ENCODE measurements at regions of chr15 and their contacts with region 1.

Region 1: DNA sequence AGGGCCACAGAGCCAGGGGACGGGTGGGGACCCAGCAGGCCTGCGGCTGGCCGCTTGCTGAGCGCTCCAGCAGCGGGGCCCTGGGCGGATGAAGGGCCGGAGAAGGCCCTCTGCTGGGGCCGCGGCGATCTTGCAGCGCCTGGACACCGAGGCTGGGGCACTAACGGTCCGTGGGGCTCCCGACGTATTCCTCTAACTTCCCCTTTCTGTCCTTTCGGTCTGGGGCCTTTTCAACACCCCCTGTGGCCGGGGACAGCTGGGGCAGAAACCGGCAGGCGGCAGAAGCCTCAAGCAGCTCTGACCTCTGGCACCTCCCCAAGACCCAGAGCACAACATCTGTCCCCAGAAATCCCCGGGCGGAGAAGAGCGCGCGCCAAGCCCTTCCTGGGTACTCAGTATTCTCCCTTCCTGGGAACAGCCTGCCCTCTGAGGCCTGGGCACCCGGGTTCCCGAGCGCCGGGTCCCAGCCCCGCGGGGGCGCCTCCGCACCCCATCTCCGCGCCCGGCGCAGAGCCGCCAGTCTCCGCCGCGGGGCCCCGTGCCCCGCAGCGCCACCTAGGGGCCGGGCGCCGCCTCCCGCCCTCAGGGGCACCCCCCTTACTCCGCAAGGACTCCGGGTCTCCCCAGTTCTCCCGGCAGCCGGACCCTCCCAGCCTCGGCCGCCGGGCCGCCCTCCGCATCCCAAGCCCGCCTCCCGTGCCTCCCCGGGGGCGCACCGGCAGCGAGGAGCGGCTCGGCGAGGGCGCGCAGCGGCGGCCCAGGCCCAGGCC is 582 bp upstream of the SLCO3A1 start:
- DNase-seq: peak; percentile 62 to 86 (median 78)
- H3K4me3 ChIP-seq: peak overlapping the region; percentile 55 to 86 (median 74)
- H3K27ac ChIP-seq: peak overlapping the region; percentile 40 to 99 (median 97)
- H3K27me3 ChIP-seq: no peaks in the 10 kb centered on the region
- CTCF ChIP-seq: peak; percentile 24 to 95 (median 67)

Region 2: GRCh38 chr15:91302588-91303439 is 550.1 kb before region 1 on chr15:
- intact Hi-C with region 1: loop called (anchors 1 to 5 kb)
- DNase-seq: peak in 4 of 10 donors; percentile 21 to 46 (median 34)
- H3K4me3 ChIP-seq: peak overlapping the region in 13 of 59 donors; percentile 1 to 43 (median 20)
- H3K27ac ChIP-seq: no peak overlapping the region
- H3K27me3 ChIP-seq: peaks cover 0 to 10% (median 0%) of the 10 kb centered on the region in 45 donors
- CTCF ChIP-seq: peak; percentile 51 to 90 (median 78)

Region 3: DNA sequence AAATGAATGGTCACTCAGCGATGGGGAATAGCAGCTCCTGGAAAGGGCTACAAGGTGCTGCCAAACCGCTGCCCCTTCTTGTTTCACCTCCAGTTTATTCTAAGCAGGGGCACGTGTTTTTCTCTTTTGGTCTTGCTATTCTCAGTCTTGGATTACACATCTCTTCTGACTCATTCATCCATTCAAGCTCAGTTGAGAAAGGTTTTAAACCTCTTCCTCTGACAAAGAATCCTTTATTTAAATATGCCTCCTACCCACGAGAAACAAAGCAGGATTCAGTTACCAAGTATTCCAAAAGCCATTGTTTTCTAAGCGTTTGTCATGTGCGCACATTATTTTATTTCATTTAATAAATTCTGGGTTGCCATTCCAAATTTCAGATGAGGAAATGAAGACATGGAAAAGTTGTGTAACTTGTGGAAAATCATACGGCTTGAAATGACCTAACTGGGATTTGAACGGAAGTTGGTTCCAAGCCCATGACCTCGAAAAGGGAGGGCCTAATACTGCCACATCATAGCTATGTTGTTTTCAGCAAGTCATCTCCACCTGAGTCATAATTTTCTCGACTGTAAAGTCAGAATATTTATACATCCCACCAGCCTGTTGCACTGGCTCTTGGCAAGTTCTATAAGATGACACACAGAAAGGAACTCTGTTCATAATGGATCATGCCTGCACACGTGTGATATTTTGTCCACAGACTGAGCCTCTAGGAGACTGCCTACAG is 291.4 kb before region 1 on chr15:
- intact Hi-C with region 1: loop called (anchors 2 kb)
- DNase-seq: no peak
- H3K4me3 ChIP-seq: peak overlapping the region in 4 of 59 donors; percentile 9 to 25 (median 15)
- H3K27ac ChIP-seq: peak overlapping the region in 58 of 59 donors; percentile 82 to 100 (median 97)
- H3K27me3 ChIP-seq: no peaks in the 10 kb centered on the region
- CTCF ChIP-seq: peak in 2 of 56 donors; percentile 15 to 16

Region 4: GRCh38 chr15:91752081-91752785 is 100.7 kb before region 1 on chr15:
- intact Hi-C with region 1: loop called (anchors 2 to 5 kb)
- DNase-seq: peak in 6 of 10 donors; percentile 7 to 74 (median 56)
- H3K4me3 ChIP-seq: no peak overlapping the region
- H3K27ac ChIP-seq: peak overlapping the region; percentile 21 to 97 (median 89)
- H3K27me3 ChIP-seq: peaks cover 0 to 7% (median 0%) of the 10 kb centered on the region in 45 donors
- CTCF ChIP-seq: peak in 1 of 56 donors; percentile 14

Region 5: DNA sequence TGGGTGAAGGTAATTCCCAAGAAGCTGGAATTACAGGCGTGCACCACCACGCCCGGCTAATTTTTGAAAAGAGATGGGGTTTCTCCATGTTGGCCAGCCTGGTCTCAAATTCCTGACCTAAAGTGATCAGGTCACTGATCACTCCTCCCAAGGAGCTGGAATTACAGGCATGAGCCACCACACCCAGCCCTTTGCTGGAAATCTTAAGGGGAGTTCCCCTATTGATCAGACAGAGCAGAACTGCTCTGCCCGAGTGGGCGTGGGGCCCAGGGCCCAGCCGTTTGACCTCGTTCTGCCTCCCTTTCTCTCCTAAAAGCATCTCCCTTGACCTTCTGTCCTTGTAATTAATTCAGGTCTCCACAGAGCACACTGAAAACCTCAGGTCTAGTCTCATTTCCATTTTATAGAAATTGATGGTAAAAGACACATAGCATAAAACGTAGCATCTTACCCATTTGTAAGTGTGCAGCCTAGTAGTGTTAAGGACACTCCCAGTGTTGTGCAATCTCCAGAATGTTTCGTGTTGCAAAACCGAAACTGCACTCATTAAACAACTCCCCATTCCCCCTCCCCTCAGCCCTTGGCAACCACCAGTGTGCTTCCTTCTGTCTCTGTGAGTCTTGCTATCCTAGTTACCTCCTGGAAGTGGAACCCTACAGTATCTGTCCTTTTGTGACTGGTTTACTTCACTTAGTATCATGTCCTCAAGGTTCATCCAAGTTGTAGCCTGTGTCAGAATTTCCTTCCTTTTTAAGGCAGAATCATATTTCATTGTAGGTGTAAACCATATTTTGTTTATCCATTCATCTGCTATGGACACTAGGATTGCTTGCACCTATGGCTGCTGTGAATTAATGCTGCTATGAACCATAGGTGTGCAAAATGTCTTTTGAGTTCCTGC is 90.0 kb after region 1 on chr15:
- intact Hi-C with region 1: loop called (anchors 2 to 5 kb)
- DNase-seq: peak in 1 of 10 donors; percentile 36
- H3K4me3 ChIP-seq: peak overlapping the region in 22 of 59 donors; percentile 1 to 42 (median 17)
- H3K27ac ChIP-seq: peak overlapping the region in 41 of 59 donors; percentile 9 to 81 (median 46)
- H3K27me3 ChIP-seq: no peaks in the 10 kb centered on the region
- CTCF ChIP-seq: peak in 3 of 56 donors; percentile 10 to 15 (median 11)